Naive thymus-derived CD4-positive, alpha-beta T cell (primary cell): ENCODE measurements at regions of chr17 and their contacts with region 1.

Region 1: DNA sequence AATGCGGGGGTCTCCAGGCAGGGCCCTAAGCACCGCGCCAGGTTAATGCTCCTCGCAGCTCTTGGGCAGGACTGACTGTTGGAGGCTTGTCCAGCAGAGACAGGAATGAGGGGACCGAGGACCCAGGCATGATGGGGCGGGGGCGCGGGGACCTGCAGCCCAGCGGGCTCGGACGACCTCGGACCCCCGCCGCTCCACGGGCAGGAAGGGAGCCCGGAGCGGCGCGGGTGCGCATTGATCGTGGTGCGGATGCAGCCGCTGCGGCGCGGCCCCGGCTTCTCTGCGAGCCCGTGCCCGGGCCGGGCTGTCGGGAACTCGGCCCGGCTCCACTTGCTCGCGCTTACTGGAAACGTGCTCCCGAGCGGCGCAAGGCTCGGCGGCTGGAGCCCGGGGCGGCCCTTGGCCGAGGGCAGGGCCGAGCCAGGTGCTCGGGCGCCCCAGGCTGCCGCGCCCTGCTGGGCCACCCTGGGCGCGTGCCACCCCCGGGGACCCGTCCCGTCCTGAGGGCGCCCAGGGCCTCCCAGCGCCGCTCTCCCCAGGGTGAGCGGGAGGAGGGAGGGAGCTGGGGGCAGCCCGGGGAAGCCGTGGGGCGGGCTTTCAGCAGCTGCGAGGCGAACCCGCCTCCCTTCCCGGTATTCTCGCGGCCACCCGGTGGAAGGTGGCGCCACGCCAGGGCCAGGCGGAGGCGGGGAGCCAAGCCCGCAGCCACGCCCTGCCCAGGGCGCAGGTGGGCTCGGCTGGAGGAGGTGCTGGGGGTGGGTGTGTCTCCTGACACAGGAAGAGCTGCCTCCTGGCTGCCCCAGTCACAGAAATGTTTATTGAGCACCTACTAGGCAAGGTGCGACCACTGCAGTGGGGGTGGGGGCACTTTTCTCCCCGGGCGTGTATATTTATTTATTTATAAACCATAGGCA is 45.9 kb downstream of the SOCS3 start:
- DNase-seq: peak; percentile 47 to 78 (median 70)
- ATAC-seq: peak; percentile 79
- H3K4me3 ChIP-seq: peak overlapping the region; percentile 56
- H3K4me3 Mint-ChIP-seq: peak overlapping the region; percentile 68 to 89 (median 79)
- H3K27ac ChIP-seq: peak overlapping the region; percentile 59
- H3K27ac Mint-ChIP-seq: peak overlapping the region; percentile 77 to 94 (median 88)
- H3K4me1 ChIP-seq: peaks cover 22 to 36% of the 10 kb centered on the region in 2 donors
- H3K4me1 Mint-ChIP-seq: peaks cover 42 to 63% (median 56%) of the 10 kb centered on the region in 7 donors
- H3K27me3 ChIP-seq: no peaks in the 10 kb centered on the region
- H3K27me3 Mint-ChIP-seq: peaks cover 0 to 24% (median 0%) of the 10 kb centered on the region in 5 donors

Region 2: GRCh38 chr17:78289802-78290363 is 24.1 kb before region 1 on chr17:
- CTCF ChIA-PET with region 1: interaction called, 4 read pairs
- POLR2A ChIA-PET with region 1: interaction called, 4 read pairs
- intact Hi-C with region 1: loop called in 1 of 2 experiments (anchors 1 kb)
- DNase-seq: peak; percentile 41 to 82 (median 71)
- ATAC-seq: peak; percentile 97
- H3K4me3 ChIP-seq: no peak overlapping the region
- H3K4me3 Mint-ChIP-seq: no peak overlapping the region
- H3K27ac ChIP-seq: no peak overlapping the region
- H3K27ac Mint-ChIP-seq: no peak overlapping the region
- H3K4me1 ChIP-seq: peaks cover 4 to 8% of the 10 kb centered on the region in 2 donors
- H3K4me1 Mint-ChIP-seq: peaks cover 0 to 10% (median 5%) of the 10 kb centered on the region in 7 donors
- H3K27me3 ChIP-seq: no peaks in the 10 kb centered on the region
- H3K27me3 Mint-ChIP-seq: no peaks in the 10 kb centered on the region

Region 3: DNA sequence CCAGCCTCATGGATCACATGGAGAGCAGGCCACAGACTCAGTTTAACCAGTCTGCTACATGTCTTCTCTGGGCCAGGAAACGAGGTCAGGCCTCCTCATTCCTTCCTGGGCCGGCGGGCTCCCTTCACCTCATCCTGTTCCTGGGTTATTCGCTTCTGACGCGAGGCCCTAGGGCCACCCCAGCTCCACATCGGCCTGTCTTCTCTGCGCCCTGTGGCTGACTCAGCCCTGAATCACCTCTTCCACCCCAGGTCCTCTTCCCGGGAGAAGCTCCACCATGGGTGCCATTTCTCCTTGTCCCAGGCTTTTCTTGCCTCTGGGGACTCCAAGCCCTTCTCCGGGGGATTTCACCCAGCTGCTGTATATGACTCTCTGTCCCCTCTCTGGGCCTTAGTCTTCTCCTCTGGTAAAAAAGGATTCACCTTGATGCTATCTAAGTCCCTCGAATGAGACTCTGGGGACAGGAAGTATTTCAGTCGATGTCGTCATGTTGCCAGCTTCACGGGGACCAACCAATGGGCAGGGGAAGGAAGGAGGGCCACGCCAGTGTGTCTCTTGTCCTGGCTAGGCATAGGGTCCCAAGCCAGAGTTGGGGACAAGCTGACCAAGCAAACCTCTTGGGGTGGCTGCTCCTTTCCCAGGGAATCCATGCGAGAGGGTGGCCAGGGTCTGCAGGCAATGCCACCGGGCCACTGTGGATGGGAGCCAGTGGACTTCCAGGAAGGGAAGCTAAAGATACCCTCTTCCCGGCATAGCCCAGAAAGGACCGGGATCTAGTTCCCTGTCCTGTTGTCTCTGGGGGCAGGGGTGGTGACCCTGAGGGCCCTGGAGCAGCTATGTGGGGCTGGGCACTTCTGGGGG is 12.8 kb before region 1 on chr17:
- CTCF ChIA-PET with region 1: no interaction called
- POLR2A ChIA-PET with region 1: interaction called, 10 read pairs
- intact Hi-C with region 1: no loop called
- DNase-seq: no peak
- ATAC-seq: no peak
- H3K4me3 ChIP-seq: no peak overlapping the region
- H3K4me3 Mint-ChIP-seq: peak overlapping the region in 1 of 10 donors; percentile 53
- H3K27ac ChIP-seq: no peak overlapping the region
- H3K27ac Mint-ChIP-seq: peak overlapping the region in 6 of 9 donors; percentile 14 to 78 (median 60)
- H3K4me1 ChIP-seq: peaks cover 0 to 8% of the 10 kb centered on the region in 2 donors
- H3K4me1 Mint-ChIP-seq: peaks cover 7 to 11% (median 8%) of the 10 kb centered on the region in 7 donors
- H3K27me3 ChIP-seq: no peaks in the 10 kb centered on the region
- H3K27me3 Mint-ChIP-seq: no peaks in the 10 kb centered on the region

Region 4: DNA sequence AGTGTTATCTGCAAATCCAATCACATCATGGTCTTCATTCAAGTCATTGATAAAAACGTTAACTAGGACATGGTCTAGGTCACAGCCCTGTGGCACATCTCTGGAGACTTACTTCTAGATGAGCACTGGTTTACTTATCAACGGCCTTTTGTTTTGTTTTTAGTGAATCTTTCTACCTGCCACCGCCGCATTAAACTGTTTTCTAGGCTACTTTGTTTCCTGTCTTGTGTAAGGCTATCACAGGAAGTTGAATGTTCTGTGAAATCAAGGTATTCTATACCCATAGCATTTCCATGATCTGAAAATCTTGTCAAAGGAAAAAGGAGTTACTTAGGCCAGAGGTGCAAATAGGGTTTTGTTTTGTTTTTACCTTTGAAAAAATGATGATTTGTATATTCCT is 19.0 kb after region 1 on chr17:
- CTCF ChIA-PET with region 1: interaction called, 3 read pairs
- POLR2A ChIA-PET with region 1: interaction called, 10 read pairs
- intact Hi-C with region 1: loop called in 1 of 2 experiments (anchors 2 kb)
- DNase-seq: peak in 3 of 9 donors; percentile 40 to 50 (median 42)
- ATAC-seq: no peak
- H3K4me3 ChIP-seq: no peak overlapping the region
- H3K4me3 Mint-ChIP-seq: peak overlapping the region; percentile 45 to 76 (median 62)
- H3K27ac ChIP-seq: peak overlapping the region; percentile 56
- H3K27ac Mint-ChIP-seq: peak overlapping the region; percentile 80 to 98 (median 96)
- H3K4me1 ChIP-seq: peaks cover 13 to 22% of the 10 kb centered on the region in 2 donors
- H3K4me1 Mint-ChIP-seq: peaks cover 25 to 44% (median 33%) of the 10 kb centered on the region in 7 donors
- H3K27me3 ChIP-seq: no peaks in the 10 kb centered on the region
- H3K27me3 Mint-ChIP-seq: peaks cover 0 to 6% (median 0%) of the 10 kb centered on the region in 5 donors

Region 5: DNA sequence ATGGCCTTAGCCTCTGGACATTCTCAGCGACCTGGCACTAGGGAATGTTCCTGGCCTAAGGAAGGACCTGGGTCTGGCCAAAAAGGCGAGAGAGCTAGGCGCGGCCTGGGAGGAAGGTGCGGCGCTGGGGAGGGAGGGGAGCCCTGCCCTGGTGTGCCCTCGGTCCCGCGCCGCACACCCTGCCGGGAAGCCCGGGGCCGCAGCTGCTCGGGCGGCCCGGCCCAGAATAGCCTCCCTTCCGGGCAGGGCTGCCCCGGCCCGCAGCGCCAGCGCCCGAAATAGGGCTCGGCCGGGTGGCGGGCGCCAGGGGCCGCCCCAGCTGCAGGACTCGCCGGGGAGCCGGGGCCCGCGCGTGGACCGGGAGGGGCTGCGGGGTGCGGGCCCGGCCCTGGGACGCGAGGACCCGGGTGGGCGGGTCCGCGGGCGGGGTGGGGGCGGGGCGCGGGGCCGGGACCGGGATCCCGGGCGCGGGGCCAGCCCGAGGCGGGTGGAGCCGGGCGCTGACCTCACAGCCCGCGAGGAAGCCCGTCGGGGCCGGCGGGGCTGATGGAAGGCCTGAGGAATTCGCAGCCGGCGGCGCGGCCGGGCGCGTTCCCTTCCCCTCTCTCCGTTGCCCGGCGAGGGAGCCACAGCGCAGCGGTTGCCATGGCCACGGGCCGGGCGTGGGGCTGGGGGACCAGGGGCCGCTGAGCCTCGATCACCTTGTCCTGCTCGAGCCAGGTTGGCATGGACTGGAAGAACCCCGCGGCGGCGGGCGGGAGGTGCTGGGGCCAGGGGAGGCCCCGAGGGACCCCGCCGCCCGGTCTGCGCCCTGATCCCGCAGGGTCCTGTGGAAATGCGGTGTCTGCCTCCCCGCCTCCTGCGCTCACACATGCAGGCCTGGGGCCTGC is 27.8 kb after region 1 on chr17:
- CTCF ChIA-PET with region 1: interaction called, 3 read pairs
- POLR2A ChIA-PET with region 1: interaction called, 15 read pairs
- intact Hi-C with region 1: loop called in 1 of 2 experiments (anchors 2 kb)
- DNase-seq: peak in 2 of 9 donors; percentile 28 to 48
- ATAC-seq: peak; percentile 15
- H3K4me3 ChIP-seq: peak overlapping the region; percentile 24
- H3K4me3 Mint-ChIP-seq: peak overlapping the region in 8 of 10 donors; percentile 53 to 85 (median 72)
- H3K27ac ChIP-seq: peak overlapping the region; percentile 82
- H3K27ac Mint-ChIP-seq: peak overlapping the region in 5 of 9 donors; percentile 32 to 98 (median 97)
- H3K4me1 ChIP-seq: peaks cover 43 to 67% of the 10 kb centered on the region in 2 donors
- H3K4me1 Mint-ChIP-seq: peaks cover 54 to 75% (median 62%) of the 10 kb centered on the region in 7 donors
- H3K27me3 ChIP-seq: no peaks in the 10 kb centered on the region
- H3K27me3 Mint-ChIP-seq: peaks cover 0 to 15% (median 0%) of the 10 kb centered on the region in 5 donors

Region 6: GRCh38 chr17:78378225-78379130 is 64.5 kb after region 1 on chr17 and contains the start of gene PGS1:
- CTCF ChIA-PET with region 1: interaction called, 4 read pairs
- POLR2A ChIA-PET with region 1: no interaction called
- intact Hi-C with region 1: loop called in 1 of 2 experiments (anchors 2 kb)
- DNase-seq: peak; percentile 76 to 91 (median 87)
- ATAC-seq: peak; percentile 70
- H3K4me3 ChIP-seq: peak within 1 kb of the TSS; percentile 82
- H3K4me3 Mint-ChIP-seq: peak within 1 kb of the TSS; percentile 65 to 96 (median 93)
- H3K27ac ChIP-seq: peak within 1 kb of the TSS; percentile 73
- H3K27ac Mint-ChIP-seq: peak within 1 kb of the TSS; percentile 87 to 93 (median 91)
- H3K4me1 ChIP-seq: peaks cover 35 to 44% of the 10 kb centered on the region in 2 donors
- H3K4me1 Mint-ChIP-seq: peaks cover 38 to 51% (median 42%) of the 10 kb centered on the region in 7 donors
- H3K27me3 ChIP-seq: no peaks in the 10 kb centered on the region
- H3K27me3 Mint-ChIP-seq: no peaks in the 10 kb centered on the region
- total RNA-seq, gene PGS1: 66.6 to 84.3 (median 82.0) TPM